Psoas muscle (tissue), 8 donors: ENCODE measurements at regions of chr11 and their contacts with region 1.

Region 1: GRCh38 chr11:7672960-7673723 is at the start of gene CYB5R2:
- DNase-seq: peak; percentile 75 to 82
- ATAC-seq: peak; percentile 68 to 86 (median 80)
- H3K4me3 ChIP-seq: peak within 1 kb of the TSS; percentile 73
- H3K27ac ChIP-seq: no peak within 1 kb of the TSS
- H3K4me1 ChIP-seq: no peaks in the 10 kb centered on the region
- H3K27me3 ChIP-seq: peaks cover 0 to 10% (median 5%) of the 10 kb centered on the region in 3 donors
- CTCF ChIP-seq: no peak
- total RNA-seq, gene CYB5R2: 0.40 to 1.8 (median 1.5) TPM

Region 2: GRCh38 chr11:7457211-7457610 is 215.9 kb before region 1 on chr11:
- intact Hi-C with region 1: loop called in 1 of 2 experiments (anchors 10 kb)
- DNase-seq: no peak
- ATAC-seq: peak in 1 of 4 donors; percentile 55
- H3K4me3 ChIP-seq: no peak overlapping the region
- H3K27ac ChIP-seq: no peak overlapping the region
- H3K4me1 ChIP-seq: no peaks in the 10 kb centered on the region
- H3K27me3 ChIP-seq: no peaks in the 10 kb centered on the region
- CTCF ChIP-seq: no peak